H1 (cell line): ENCODE measurements at regions of chr19 and their contacts with region 1.

Region 1: DNA sequence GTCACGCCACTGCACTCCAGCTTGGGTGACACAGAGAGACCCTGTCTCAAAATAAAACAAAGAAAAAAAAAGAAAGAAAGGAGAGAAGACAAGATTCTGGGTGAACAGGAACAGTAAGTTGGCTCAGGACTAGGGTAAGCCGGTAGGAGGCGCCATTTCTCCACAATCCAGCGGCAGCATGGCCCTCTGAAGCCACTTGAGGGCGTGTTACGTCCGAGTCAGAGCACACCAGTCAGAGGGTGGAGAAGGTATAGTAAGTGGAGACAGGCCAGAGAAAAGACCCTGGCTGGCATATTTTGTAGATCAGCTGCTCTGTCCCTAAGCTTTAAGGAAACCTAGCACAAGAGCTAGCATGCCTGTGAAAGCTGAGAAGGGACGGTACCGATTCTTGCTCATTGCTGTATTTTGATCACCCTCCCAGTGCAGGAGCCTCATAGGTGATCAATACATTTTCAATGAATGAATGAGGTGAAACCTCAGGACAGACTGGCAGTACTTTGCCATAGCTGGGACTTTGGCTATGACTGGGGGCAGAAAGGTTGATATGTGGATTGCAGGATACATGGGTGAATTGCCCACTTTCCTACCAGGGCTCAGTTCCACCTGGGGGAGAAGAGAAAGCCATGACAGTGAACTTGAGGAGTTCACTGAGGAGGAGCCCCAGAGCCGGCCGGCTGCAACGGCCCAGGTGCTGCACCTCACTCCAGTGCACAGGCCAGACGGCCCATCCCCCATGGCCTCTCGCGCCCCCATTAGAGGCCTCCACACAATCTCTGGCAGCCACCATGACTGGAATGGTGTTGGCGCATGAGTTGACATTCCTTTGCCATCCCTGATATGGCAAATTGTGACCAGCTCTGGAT is 23.5 kb downstream of the POU2F2 start:
- DNase-seq: peak; percentile 82 to 95
- H3K4me3 ChIP-seq: no peak overlapping the region
- H3K27ac ChIP-seq: no peak overlapping the region
- H3K4me1 ChIP-seq: peaks cover 0 to 12% (median 4%) of the 10 kb centered on the region in 4 experiments; a peak in 6 of 7 replicates
- H3K27me3 ChIP-seq: no peaks in the 10 kb centered on the region
- CTCF ChIP-seq: peak; percentile 100
- EP300 ChIP-seq: peak in 1 of 2 experiments; percentile 26; a peak in 1 of 3 replicates
- POLR2A ChIP-seq: no peak
- RAD21 ChIP-seq: peak; percentile 100

Region 2: DNA sequence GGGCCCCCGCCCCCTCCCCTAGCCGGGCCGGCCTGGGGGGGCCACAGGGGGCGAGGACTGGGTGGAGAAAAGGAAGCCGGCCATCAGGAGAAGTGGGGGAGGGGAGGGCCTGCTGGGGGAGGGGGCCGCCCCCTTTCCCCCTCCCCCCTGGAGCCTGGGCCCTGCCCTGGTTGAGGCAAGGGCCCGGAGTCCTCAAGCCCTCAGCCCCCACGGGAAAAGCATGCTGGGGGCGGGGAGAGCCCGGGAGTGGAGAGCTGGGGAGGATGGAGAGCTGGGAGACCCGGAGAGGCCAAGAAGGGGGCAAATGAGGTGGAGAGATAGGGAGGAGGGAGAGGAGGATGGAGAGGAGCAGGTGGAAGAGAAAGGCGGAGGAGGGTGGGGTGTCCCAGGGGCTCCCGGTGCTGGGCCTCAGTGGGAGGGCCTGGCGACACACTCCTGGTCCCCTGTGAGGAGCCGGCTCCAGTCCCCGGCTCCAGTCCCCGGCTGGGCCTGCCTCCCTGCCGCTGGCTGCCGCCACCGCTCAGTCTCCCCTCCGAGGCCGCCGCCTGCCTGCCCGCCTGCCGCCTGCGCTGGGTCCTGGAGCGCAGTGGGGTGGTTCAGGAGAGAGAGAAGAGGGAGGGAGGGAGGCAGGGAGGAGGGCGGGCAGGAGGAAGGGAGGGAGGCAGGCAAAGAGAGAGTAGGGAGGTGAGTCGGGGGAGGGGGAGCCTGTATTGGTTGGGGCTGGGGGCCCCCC is 39.0 kb before region 1 on chr19 and contains the start of gene GRIK5:
- CTCF ChIA-PET with region 1: no interaction called
- POLR2A ChIA-PET with region 1: no interaction called
- DNase-seq: peak in 1 of 2 experiments; percentile 67
- H3K4me3 ChIP-seq: peak within 1 kb of the TSS; percentile 54 to 83 (median 70)
- H3K27ac ChIP-seq: no peak within 1 kb of the TSS
- H3K4me1 ChIP-seq: peaks cover 0 to 18% (median 6%) of the 10 kb centered on the region in 4 experiments; a peak in 6 of 7 replicates
- H3K27me3 ChIP-seq: no peaks in the 10 kb centered on the region
- CTCF ChIP-seq: no peak
- EP300 ChIP-seq: no peak
- POLR2A ChIP-seq: no peak; a peak in 1 of 3 replicates
- RAD21 ChIP-seq: no peak
- total RNA-seq, gene GRIK5: 42.9 and 45.1 TPM in 2 replicates

Region 3: DNA sequence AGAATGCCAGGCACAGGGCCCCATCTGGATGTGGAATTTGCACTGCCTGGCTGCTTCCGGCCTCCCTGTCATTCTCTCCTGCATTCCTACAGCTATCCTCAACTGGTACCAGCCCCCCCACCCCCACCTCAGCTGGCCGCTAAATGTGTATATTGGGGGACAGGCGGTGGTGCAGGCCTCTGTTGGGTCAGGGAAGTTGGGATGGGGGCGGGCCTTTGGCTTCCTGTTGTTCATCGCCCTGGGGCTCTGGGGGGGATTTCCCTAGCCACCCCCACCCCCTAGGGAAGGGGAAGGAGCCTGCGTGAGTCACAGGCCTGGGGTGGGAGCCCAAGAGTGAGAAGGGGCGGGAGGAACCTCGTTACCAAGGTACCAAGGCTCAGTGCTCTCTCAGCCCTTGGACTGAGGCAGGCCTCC is 12.9 kb after region 1 on chr19:
- CTCF ChIA-PET with region 1: interaction called, 59 read pairs
- POLR2A ChIA-PET with region 1: interaction called, 5 read pairs
- DNase-seq: no peak
- H3K4me3 ChIP-seq: no peak overlapping the region
- H3K27ac ChIP-seq: no peak overlapping the region
- H3K4me1 ChIP-seq: peaks cover 0 to 12% (median 8%) of the 10 kb centered on the region in 4 experiments; a peak in 4 of 7 replicates
- H3K27me3 ChIP-seq: no peaks in the 10 kb centered on the region
- CTCF ChIP-seq: no peak
- EP300 ChIP-seq: no peak
- POLR2A ChIP-seq: no peak
- RAD21 ChIP-seq: no peak

Region 4: GRCh38 chr19:42140125-42140754 is 31.5 kb after region 1 on chr19:
- CTCF ChIA-PET with region 1: interaction called, 146 read pairs
- POLR2A ChIA-PET with region 1: no interaction called
- DNase-seq: peak; percentile 31 to 91
- H3K4me3 ChIP-seq: no peak overlapping the region
- H3K27ac ChIP-seq: no peak overlapping the region
- H3K4me1 ChIP-seq: peaks cover 0 to 6% (median 0%) of the 10 kb centered on the region in 4 experiments; a peak in 2 of 7 replicates
- H3K27me3 ChIP-seq: no peaks in the 10 kb centered on the region; a peak in 3 of 7 replicates
- CTCF ChIP-seq: no peak
- EP300 ChIP-seq: no peak
- POLR2A ChIP-seq: no peak
- RAD21 ChIP-seq: peak; percentile 8 to 29; a peak in 1 of 4 replicates

Region 5: DNA sequence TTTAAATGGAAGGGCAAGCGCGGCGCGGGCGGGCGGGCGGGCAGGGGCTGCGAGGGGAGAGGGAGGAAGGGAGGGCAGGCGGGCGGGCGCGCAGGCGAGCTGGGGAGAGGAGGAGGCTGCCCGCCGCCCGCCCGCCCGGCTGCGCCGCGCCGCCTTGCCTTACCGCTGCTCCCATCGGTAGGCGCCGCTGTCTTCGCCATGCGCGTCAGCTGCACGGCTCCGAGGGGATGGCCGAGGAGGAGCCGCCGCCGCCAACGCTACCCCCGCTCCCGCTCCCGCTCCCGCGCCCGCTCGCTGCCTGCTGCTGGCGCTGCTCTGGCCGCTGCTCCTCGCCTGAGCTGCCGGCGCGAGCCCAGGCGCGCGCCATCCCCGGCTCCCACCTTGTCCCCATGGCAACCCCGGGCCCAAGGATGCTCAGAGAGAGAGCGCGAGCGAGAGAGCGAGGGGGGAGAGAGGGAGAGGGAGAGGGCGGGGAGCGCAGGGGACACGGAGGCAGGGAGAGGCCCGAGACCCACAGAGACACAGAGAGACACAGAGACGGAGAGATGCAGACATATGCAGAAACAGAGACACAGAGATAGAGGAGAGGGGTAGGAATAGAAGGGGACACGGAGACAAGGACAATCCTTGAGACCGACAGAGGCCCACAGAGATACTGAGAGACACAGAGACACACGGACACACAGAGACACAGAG is 68.4 kb after region 1 on chr19:
- CTCF ChIA-PET with region 1: interaction called, 22 read pairs
- POLR2A ChIA-PET with region 1: interaction called, 3 read pairs
- DNase-seq: peak in 1 of 2 experiments; percentile 87
- H3K4me3 ChIP-seq: peak overlapping the region; percentile 28 to 79 (median 48)
- H3K27ac ChIP-seq: no peak overlapping the region
- H3K4me1 ChIP-seq: peaks cover 0 to 10% (median 7%) of the 10 kb centered on the region in 4 experiments; a peak in 5 of 7 replicates
- H3K27me3 ChIP-seq: peaks cover 40 to 72% (median 64%) of the 10 kb centered on the region in 4 experiments
- CTCF ChIP-seq: peak in 2 of 3 experiments; percentile 32 to 62; a peak in 2 of 4 replicates
- EP300 ChIP-seq: no peak
- POLR2A ChIP-seq: no peak
- RAD21 ChIP-seq: peak in 1 of 2 experiments; percentile 22; a peak in 3 of 4 replicates